ENCODE measurements at regions of chr16 and their contacts with region 1.

Region 1: GRCh38 chr16:80580109-80580832 is 39.5 kb downstream of the DYNLRB2 start:
- DNase-seq: peak; percentile 89
- H3K4me3 Mint-ChIP-seq: peak overlapping the region; percentile 52
- H3K27ac Mint-ChIP-seq: peak overlapping the region; percentile 89
- H3K4me1 Mint-ChIP-seq: peaks cover 52% of the 10 kb centered on the region
- H3K27me3 Mint-ChIP-seq: peaks cover 2% of the 10 kb centered on the region

Region 2: GRCh38 chr16:79845033-79845733 is 735.1 kb before region 1 on chr16:
- CTCF ChIA-PET with region 1: no interaction called
- POLR2A ChIA-PET with region 1: no interaction called
- intact Hi-C with region 1: loop called (anchors 5 kb)
- DNase-seq: peak; percentile 58
- H3K4me3 Mint-ChIP-seq: peak overlapping the region; percentile 45
- H3K27ac Mint-ChIP-seq: peak overlapping the region; percentile 69
- H3K4me1 Mint-ChIP-seq: peaks cover 40% of the 10 kb centered on the region
- H3K27me3 Mint-ChIP-seq: peaks cover 5% of the 10 kb centered on the region

Region 3: GRCh38 chr16:80176114-80176513 is 404.2 kb before region 1 on chr16:
- CTCF ChIA-PET with region 1: no interaction called
- POLR2A ChIA-PET with region 1: no interaction called
- intact Hi-C with region 1: no loop called
- DNase-seq: no peak
- H3K4me3 Mint-ChIP-seq: no peak overlapping the region
- H3K27ac Mint-ChIP-seq: no peak overlapping the region
- H3K4me1 Mint-ChIP-seq: no peaks in the 10 kb centered on the region
- H3K27me3 Mint-ChIP-seq: peaks cover 27% of the 10 kb centered on the region

Region 4: DNA sequence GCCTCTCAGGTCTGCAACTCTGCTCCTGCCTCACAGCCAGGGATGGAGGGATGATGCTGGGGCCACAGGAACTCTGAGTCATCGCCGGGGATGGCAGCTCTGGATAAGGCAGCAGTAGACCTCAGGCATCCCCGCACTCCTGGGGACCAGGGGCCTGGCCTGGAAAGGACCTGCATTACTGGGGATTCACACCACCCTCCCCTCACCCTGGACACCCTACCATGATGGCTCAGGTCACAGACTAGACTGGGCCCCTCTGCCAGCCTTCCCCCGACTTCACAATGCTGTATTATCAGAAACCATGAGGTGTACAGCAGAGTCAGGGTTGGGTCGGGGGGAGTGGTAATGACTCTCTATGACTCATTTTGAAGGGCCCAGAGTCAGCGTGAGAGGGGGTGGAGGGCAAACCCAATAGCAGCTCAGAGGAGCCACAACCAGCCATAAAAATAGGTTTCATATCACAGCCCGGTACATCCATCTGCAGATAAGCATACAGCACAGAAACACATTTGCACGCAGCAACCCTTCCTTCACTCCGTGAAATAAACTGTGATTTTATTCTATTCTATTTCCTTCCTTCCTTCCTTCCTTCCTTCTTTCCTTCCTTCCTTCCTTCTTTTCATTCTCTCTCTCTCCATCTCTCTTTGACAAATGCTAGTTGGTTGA is 10.7 kb before region 1 on chr16:
- CTCF ChIA-PET with region 1: no interaction called
- POLR2A ChIA-PET with region 1: interaction called, 18 read pairs
- intact Hi-C with region 1: loop called (anchors 1 kb)
- DNase-seq: peak; percentile 92
- H3K4me3 Mint-ChIP-seq: peak overlapping the region; percentile 22
- H3K27ac Mint-ChIP-seq: peak overlapping the region; percentile 85
- H3K4me1 Mint-ChIP-seq: peaks cover 36% of the 10 kb centered on the region
- H3K27me3 Mint-ChIP-seq: no peaks in the 10 kb centered on the region

Region 5: DNA sequence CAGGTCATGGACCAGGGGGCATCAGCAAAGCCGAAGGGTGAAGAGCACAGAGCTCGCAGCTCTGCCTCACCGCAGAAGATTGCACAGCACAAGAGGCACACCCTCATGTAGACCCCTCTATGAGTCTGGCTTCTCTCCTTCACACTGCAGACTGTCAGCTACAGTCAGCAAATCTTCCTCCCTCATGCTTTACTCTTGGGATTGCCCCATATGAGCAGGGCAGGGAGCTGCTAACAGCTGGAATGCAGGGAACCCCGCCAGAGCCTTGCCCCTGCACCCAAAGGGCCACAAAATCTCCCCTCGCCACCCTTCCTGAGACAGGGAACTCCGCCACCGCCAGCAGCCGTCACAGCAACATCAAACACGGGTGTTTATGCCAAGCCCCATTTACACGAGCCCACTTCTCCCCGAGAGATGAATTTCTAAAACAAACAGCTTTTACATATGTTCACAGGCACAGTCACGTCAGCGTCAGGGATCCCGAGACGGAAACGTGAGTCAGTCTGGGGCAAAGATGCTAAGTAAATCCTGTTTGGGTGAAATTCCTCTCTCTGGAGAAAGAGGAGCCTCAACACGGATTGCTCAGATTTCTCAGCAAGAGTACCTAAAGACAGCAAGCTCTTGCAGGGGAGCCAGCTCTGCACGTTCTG is 102.3 kb after region 1 on chr16:
- CTCF ChIA-PET with region 1: no interaction called
- POLR2A ChIA-PET with region 1: no interaction called
- intact Hi-C with region 1: loop called (anchors 1 kb)
- DNase-seq: no peak
- H3K4me3 Mint-ChIP-seq: no peak overlapping the region
- H3K27ac Mint-ChIP-seq: no peak overlapping the region
- H3K4me1 Mint-ChIP-seq: peaks cover 23% of the 10 kb centered on the region
- H3K27me3 Mint-ChIP-seq: no peaks in the 10 kb centered on the region

Region 6: DNA sequence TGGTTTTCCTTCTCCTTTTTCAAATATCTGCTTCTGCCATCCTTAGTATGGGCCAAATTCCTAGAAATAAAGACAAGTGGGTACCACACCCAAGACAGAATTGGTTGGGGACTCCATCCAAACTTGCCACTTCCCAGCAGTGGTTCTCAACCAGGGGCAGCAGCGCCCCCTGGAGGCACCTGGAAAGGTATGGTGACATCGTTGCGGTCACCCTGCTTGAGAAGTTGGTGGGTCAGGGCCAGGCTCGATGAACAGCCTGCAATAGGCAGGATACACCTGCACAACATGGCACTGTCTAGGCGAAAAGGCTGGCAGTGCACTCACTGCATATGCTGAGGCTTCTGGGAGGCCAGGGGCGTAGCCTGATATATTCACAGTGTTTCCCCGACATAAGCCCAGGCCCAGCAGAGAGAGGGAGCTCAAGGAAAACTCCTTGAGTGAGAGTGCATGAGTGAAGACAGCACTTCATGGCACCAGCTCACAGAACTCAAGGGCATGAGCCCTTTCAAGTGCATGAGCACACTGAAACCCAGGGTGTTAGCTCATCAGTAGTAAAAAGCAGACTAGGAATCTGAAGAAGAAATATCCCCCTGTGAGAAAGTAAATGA is 368.7 kb after region 1 on chr16:
- CTCF ChIA-PET with region 1: no interaction called
- POLR2A ChIA-PET with region 1: no interaction called
- intact Hi-C with region 1: loop called (anchors 5 kb)
- DNase-seq: peak; percentile 69
- H3K4me3 Mint-ChIP-seq: no peak overlapping the region
- H3K27ac Mint-ChIP-seq: no peak overlapping the region
- H3K4me1 Mint-ChIP-seq: peaks cover 22% of the 10 kb centered on the region
- H3K27me3 Mint-ChIP-seq: peaks cover 13% of the 10 kb centered on the region

Region 7: GRCh38 chr16:82302042-82302727 is 1721.9 kb after region 1 on chr16:
- CTCF ChIA-PET with region 1: no interaction called
- POLR2A ChIA-PET with region 1: no interaction called
- intact Hi-C with region 1: no loop called
- DNase-seq: no peak
- H3K4me3 Mint-ChIP-seq: no peak overlapping the region
- H3K27ac Mint-ChIP-seq: no peak overlapping the region
- H3K4me1 Mint-ChIP-seq: no peaks in the 10 kb centered on the region
- H3K27me3 Mint-ChIP-seq: peaks cover 1% of the 10 kb centered on the region